ENCODE measurements at regions of chr16 and their contacts with region 1.

Region 1: DNA sequence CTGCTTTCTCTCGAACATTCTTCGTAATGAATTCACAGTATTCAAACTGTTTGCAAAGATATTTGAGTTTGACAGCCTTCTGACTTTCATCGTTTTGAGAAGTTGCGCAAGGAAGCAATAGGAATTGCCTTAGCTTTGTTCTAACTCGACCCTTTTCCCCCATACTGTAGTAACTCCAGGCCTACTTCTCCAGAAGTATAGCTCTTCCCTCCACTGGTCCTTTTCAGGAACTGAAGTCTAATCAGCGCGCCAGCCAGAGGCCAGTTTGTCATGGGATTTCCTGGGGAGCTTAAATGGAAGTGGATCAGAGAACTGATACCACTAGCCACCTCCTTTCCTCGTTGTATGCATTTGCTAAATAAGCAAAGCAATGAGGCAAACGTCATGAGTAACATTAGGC is 27.9 kb downstream of the CDR2 start:
- DNase-seq: no peak
- CTCF ChIP-seq: no peak

Region 2: DNA sequence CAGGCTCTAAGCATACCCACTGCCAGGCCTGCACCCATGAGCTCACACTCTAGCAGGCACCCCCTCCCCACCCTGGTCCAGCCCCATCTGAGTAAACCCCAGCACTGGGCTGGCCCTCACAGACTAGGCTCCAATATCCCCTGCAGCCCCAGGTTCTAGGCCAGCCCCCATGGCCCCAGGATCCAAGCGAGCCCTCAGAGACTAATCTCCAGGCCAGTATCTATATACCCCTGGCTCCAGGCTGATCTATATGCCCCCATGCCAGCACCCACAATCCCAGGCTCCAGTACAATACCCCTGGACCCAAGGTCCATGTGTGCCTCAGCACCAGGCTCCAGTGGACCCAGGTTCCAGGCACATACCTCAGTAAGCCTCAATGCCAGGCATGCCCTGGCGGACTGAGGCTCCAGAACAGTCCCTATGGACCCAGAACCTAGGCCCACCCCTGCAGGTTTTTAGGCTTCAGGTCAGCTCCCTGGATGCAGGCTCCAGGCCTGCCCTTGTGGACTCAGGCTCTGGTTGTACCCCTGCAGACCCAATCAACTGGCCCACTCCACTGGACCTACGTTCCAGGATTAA is 10.7 kb before region 1 on chr16:
- CTCF ChIA-PET with region 1: interaction called, 10 read pairs
- POLR2A ChIA-PET with region 1: no interaction called
- DNase-seq: no peak
- CTCF ChIP-seq: no peak

Measured in GM10248 (cell line).